HCT116 (cell line): ENCODE measurements at regions of chr15 and their contacts with region 1.

Region 1: DNA sequence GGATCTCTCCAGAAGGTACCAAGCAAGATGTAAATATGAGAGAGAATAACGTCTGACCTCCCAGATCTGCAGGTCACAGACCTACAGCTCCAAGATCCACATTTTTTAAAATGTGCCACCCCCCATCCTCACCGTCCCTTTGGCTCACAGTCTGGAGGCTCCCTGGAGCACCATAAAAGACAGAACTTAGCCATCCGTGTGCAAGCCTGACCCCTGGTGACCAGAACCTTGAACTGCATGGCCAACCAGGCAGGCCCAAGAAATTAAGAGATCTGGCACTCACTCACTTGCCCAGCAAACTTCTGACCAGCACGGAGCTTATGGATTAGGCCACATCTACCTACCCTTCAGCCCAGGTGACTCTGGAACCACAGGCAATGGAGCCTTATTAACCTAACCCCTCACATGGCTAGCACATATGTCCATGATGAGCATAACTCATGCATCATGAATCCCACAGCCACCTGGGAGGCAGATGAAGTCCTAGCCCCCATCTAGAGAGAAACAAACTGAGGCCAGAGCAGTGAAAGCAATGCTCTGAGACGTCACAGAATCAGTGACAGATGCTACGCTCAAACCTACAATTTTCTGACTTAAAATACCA is 275.3 kb downstream of the UACA start:
- DNase-seq: no peak
- ATAC-seq: peak; percentile 71
- H3K4me3 ChIP-seq: no peak overlapping the region
- H3K27ac ChIP-seq: no peak overlapping the region
- H3K4me1 ChIP-seq: peaks cover 14 to 18% of the 10 kb centered on the region in 2 experiments
- H3K27me3 ChIP-seq: peaks cover 4% of the 10 kb centered on the region; the same call in 1 of the 2 replicates
- CTCF ChIP-seq: peak in 2 of 3 experiments; percentile 95 to 97; a peak in 4 of 6 replicates
- POLR2A ChIP-seq: no peak
- RAD21 ChIP-seq: no peak

Region 2: GRCh38 chr15:69576035-69576526 is 912.0 kb before region 1 on chr15:
- CTCF ChIA-PET with region 1: interaction called, 4 read pairs
- POLR2A ChIA-PET with region 1: no interaction called
- RAD21 ChIA-PET with region 1: no interaction called
- intact Hi-C with region 1: loop called (anchors 1 kb)
- DNase-seq: peak; percentile 15
- ATAC-seq: peak; percentile 94
- H3K4me3 ChIP-seq: no peak overlapping the region
- H3K27ac ChIP-seq: no peak overlapping the region
- H3K4me1 ChIP-seq: no peaks in the 10 kb centered on the region
- H3K27me3 ChIP-seq: peaks cover 5% of the 10 kb centered on the region; the same call in 1 of the 2 replicates
- CTCF ChIP-seq: peak; percentile 62 to 89 (median 83); a peak in 5 of 6 replicates
- POLR2A ChIP-seq: no peak
- RAD21 ChIP-seq: peak; percentile 82

Region 3: GRCh38 chr15:70569091-70569621 is 81.1 kb after region 1 on chr15:
- CTCF ChIA-PET with region 1: no interaction called
- POLR2A ChIA-PET with region 1: no interaction called
- RAD21 ChIA-PET with region 1: no interaction called
- intact Hi-C with region 1: no loop called
- DNase-seq: peak; percentile 73
- ATAC-seq: peak; percentile 89
- H3K4me3 ChIP-seq: peak overlapping the region; percentile 6 to 17; a peak in 3 of 4 replicates
- H3K27ac ChIP-seq: peak overlapping the region; percentile 56
- H3K4me1 ChIP-seq: peaks cover 20 to 25% of the 10 kb centered on the region in 2 experiments
- H3K27me3 ChIP-seq: no peaks in the 10 kb centered on the region
- CTCF ChIP-seq: peak; percentile 79 to 93 (median 87)
- POLR2A ChIP-seq: no peak
- RAD21 ChIP-seq: peak; percentile 93